ENCODE measurements at regions of chr17 and their contacts with region 1.

Region 1: GRCh38 chr17:75632863-75633485 is at the start of gene SMIM5:
- DNase-seq: peak; percentile 83
- ATAC-seq: peak; percentile 93
- H3K4me3 ChIP-seq: no peak within 1 kb of the TSS
- H3K27ac ChIP-seq: peak within 1 kb of the TSS; percentile 0; the same call in 1 of the 2 replicates
- H3K4me1 ChIP-seq: peaks cover 15% of the 10 kb centered on the region
- H3K27me3 ChIP-seq: no peaks in the 10 kb centered on the region
- CTCF ChIP-seq: peak; percentile 94
- POLR2A ChIP-seq: no peak
- RAD21 ChIP-seq: peak; percentile 69
- total RNA-seq, gene SMIM5: not detected in 2 replicates

Region 2: DNA sequence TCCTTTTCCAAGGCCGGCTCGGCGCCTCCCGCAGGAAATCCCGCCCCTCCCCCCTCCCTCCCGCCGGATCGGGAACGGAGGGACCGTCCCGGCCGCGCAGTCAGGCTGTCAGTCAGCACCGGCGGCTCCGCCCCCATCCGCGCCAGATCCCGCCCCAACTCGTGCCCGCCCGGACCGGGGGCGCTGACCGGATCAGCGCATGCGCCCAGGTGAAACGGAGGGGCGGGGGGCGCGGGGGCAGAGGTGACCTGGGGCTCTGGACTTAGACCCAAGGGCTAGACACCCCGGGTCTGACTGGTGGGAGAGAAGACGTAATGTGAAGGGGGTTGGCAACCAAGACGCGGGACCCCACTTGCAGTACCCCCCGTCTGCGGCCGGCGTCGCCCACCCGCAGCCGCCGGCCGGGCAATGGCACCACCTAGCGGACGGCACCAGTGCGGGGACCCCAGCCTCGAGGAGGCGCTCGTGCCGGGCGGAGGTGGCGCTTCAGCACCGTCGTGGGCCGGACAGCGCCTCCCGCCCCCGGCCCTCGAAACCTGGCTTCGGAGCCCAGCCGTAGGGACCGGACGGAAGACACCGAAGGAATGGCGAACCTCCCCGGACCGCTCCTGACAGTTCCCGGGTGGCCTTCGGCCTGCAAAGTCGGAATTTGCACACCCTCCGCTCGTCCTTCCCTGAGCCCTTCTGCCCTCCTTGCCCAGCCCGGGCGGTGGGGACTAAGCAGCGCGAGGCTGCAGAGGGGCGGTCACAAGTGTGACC is 117.3 kb before region 1 on chr17 and contains the start of gene CASKIN2:
- CTCF ChIA-PET with region 1: interaction called, 3 read pairs
- POLR2A ChIA-PET with region 1: no interaction called
- dilution Hi-C with region 1: no loop called
- in situ Hi-C with region 1: no loop called
- intact Hi-C with region 1: loop called (anchors 5 kb)
- DNase-seq: peak; percentile 86
- ATAC-seq: peak; percentile 79
- H3K4me3 ChIP-seq: peak within 1 kb of the TSS; percentile 82
- H3K27ac ChIP-seq: peak within 1 kb of the TSS; percentile 51
- H3K4me1 ChIP-seq: peaks cover 10% of the 10 kb centered on the region; the same call in 1 of the 2 replicates
- H3K27me3 ChIP-seq: no peaks in the 10 kb centered on the region
- CTCF ChIP-seq: peak; percentile 100
- POLR2A ChIP-seq: no peak
- RAD21 ChIP-seq: peak; percentile 82
- total RNA-seq, gene CASKIN2: 2.2 and 2.9 TPM in 2 replicates

Region 3: GRCh38 chr17:75589012-75589918 is 43.7 kb before region 1 on chr17:
- CTCF ChIA-PET with region 1: no interaction called
- POLR2A ChIA-PET with region 1: no interaction called
- dilution Hi-C with region 1: no loop called
- in situ Hi-C with region 1: no loop called
- intact Hi-C with region 1: loop called (anchors 1 kb)
- DNase-seq: peak; percentile 64
- ATAC-seq: peak; percentile 97
- H3K4me3 ChIP-seq: peak overlapping the region; percentile 59
- H3K27ac ChIP-seq: peak overlapping the region; percentile 20; the same call in 1 of the 2 replicates
- H3K4me1 ChIP-seq: no peaks in the 10 kb centered on the region
- H3K27me3 ChIP-seq: peaks cover 29% of the 10 kb centered on the region
- CTCF ChIP-seq: peak; percentile 64
- POLR2A ChIP-seq: no peak
- RAD21 ChIP-seq: peak; percentile 32

Region 4: DNA sequence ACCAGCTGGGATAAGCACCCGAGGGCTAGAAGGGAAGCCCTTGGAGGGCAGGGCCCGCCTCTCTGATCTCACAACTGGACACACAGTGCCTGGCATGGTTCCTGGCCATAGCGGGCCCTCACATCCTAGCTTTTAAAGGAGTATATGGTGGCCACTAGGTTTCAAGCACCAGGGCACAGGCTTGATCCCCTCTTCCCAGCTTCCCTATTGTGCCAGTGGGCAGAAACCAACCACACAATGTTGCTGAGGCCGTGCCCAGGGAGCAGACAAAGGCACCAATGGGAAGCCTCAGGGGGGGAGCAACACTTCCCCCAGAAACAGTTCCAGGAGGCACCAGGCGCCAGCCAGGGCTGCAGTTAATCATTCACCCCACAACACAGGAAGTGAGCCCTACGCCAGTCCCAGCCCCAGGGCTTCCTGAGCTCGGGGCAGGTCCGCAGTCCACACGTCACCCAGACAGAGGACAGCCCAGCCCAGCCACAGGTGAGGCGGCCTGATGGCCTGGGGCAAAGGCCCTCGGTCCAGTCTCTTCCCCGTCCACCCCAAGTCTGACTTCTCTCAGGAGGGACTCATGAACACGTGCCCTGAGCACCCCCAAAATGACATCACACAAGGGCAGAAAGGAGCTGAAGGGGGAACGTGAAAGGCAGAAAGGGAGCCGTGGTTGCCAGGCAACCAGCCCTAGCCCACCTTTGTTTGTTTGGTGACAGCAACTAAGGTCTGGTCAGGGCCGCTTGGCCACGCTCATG is 13.1 kb after region 1 on chr17:
- CTCF ChIA-PET with region 1: interaction called, 30 read pairs
- POLR2A ChIA-PET with region 1: no interaction called
- dilution Hi-C with region 1: no loop called
- in situ Hi-C with region 1: no loop called
- intact Hi-C with region 1: no loop called
- DNase-seq: no peak
- ATAC-seq: no peak
- H3K4me3 ChIP-seq: no peak overlapping the region
- H3K27ac ChIP-seq: no peak overlapping the region
- H3K4me1 ChIP-seq: no peaks in the 10 kb centered on the region
- H3K27me3 ChIP-seq: no peaks in the 10 kb centered on the region
- CTCF ChIP-seq: no peak
- POLR2A ChIP-seq: no peak
- RAD21 ChIP-seq: no peak